ENCODE measurements at regions of chr3 and their contacts with region 1.

Region 1: DNA sequence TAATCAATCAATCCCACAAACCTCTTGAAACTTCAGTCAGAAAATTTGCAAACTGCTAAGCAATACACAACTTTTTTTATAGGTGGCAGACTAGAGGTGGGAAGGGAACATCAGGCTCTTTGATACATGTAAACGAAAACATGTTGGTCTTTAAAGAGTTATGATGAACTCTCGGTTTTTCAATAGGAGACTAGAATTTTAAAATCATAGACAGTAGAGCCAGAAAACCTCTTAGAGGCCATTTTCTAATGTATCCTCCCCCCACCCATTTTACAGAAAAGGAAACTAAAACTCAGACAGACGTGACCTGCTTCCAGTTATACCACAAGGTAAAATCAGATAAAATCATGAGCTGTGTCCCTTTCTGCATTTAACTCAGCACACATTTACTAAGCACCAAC is 179.1 kb upstream of the LPP start:
- DNase-seq: no peak
- H3K4me3 Mint-ChIP-seq: peak overlapping the region; percentile 59
- H3K27ac Mint-ChIP-seq: peak overlapping the region; percentile 94
- H3K4me1 Mint-ChIP-seq: peaks cover 62% of the 10 kb centered on the region
- H3K27me3 Mint-ChIP-seq: peaks cover 2% of the 10 kb centered on the region

Region 2: GRCh38 chr3:187870360-187871203 is 104.3 kb before region 1 on chr3:
- intact Hi-C with region 1: loop called (anchors 2 kb)
- DNase-seq: no peak
- H3K4me3 Mint-ChIP-seq: peak overlapping the region; percentile 49
- H3K27ac Mint-ChIP-seq: peak overlapping the region; percentile 84
- H3K4me1 Mint-ChIP-seq: peaks cover 32% of the 10 kb centered on the region
- H3K27me3 Mint-ChIP-seq: no peaks in the 10 kb centered on the region

Region 3: GRCh38 chr3:187963677-187964385 is 11.0 kb before region 1 on chr3:
- intact Hi-C with region 1: loop called (anchors 1 kb)
- DNase-seq: no peak
- H3K4me3 Mint-ChIP-seq: no peak overlapping the region
- H3K27ac Mint-ChIP-seq: peak overlapping the region; percentile 37
- H3K4me1 Mint-ChIP-seq: peaks cover 15% of the 10 kb centered on the region
- H3K27me3 Mint-ChIP-seq: peaks cover 18% of the 10 kb centered on the region

Region 4: DNA sequence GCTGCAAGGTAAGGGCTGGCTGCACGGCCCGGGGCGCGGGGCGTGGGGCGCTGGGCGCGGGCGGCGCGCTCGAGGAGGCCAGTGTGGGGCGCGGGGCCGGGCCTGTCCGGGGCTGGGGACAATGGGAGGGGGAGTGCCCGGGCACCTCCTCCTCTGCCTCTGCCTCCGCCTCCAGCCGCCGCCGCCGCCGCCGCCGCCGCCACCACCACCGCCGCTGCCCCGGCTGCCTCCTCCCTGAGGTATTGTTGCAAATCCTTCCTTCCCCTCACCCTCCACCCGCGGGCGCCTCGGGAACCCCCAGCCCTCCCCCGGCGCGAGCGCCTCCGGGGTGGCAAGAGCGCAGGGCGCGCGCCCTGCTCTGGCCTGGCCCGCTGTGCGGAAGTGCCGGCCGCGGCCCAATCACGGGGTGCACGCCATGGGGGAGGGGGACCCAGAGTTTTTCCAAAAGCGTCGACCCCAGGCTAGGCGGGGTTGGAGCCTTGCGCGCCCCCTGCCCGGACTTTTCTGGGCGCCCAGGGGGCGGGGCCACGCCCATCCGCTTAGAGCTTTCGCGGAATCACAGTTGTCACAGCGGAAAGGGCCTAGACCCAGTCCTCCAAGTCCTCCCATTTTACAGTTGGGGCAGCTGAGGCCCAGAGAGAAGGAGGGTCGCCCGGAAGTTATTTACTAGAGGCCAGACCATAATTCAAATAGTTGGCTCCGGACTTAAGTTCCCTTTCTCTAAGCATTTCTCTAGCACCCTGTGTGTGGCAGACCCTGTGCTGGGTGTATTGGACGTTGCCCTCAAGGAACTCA is 179.3 kb after region 1 on chr3 and contains the start of gene LPP:
- intact Hi-C with region 1: loop called (anchors 1 kb)
- DNase-seq: peak; percentile 90
- H3K4me3 Mint-ChIP-seq: peak within 1 kb of the TSS; percentile 89
- H3K27ac Mint-ChIP-seq: peak within 1 kb of the TSS; percentile 87
- H3K4me1 Mint-ChIP-seq: peaks cover 71% of the 10 kb centered on the region
- H3K27me3 Mint-ChIP-seq: no peaks in the 10 kb centered on the region
- total RNA-seq, gene LPP: 38.2 and 46.4 TPM in 2 replicates

Region 5: DNA sequence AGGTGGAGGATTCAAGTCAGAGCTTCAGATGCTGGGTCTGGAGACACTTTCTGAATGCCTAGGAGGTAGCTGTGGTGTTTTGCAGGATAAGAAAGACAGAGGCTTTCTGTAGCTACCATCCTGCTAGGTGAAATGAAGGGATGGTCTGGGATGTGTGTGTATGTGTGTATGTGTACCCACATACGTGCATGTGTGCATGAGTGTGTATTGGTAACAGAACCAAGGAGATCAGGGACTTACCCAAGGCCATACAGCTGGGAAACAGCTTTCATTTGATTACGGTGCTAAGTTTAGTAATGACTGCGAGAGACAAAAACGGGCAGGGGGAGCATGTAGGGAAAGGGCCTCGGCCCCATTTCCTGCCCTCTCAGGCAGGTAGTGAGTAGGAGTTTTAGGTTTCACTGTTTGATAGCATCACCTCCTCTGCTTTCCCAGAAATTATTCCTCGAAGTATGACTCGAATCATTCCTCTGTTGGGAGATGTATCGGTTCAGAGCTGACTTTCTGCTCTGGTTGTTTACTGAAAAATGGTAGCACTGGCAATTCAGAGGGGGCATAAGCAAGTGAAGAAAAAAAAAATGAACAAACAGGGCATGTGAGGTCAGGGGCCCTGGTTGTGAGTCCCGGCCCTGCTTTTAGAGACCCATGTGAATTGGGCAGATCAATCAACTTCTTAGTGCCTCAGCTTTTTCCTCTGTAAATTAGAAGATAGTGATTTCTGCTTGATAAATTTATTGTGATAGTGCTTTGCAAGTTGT is 309.8 kb after region 1 on chr3:
- intact Hi-C with region 1: loop called (anchors 2 kb)
- DNase-seq: peak; percentile 26
- H3K4me3 Mint-ChIP-seq: peak overlapping the region; percentile 57
- H3K27ac Mint-ChIP-seq: peak overlapping the region; percentile 90
- H3K4me1 Mint-ChIP-seq: peaks cover 55% of the 10 kb centered on the region
- H3K27me3 Mint-ChIP-seq: peaks cover 2% of the 10 kb centered on the region

Measured in activated T-helper 1 cell treated with anti-CD3 and anti-CD28 coated beads, Interleukin-12 subunit alpha, Interleukin-12 subunit beta, Interleukin-2, Interleukin-4 antibody, amounts not matched to agents 30 ng/mL and 10 ng/mL and 1 ng/mL, durations not matched to agents 14 hours and 24 hours and 36 hours (primary cell).